A549 (cell line): ENCODE measurements at regions of chr1 and their contacts with region 1.

Region 1: DNA sequence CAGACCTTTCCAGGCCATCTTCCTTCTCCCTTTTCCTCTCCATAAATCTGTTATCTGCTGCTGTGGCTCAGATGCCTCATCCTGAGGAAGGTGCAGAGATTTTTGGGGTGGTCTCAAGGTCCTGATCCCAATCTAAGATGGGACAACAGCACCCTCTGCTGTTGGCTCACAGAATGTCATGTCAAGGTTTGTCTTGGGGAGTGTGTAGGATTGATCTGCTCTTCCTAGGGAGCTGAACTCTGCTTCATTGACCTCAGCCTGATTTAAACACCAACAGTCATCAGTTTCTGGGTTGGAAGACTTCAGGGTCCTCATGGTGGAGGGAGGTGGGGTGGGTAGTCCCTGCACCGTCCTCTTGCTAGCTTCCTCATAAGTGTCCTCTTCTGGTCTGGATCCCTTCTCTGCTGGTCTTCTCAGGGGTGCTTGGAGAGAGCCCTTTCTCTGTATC is 62.8 kb upstream of the LAX1 start:
- DNase-seq: peak; percentile 57 to 63
- ATAC-seq: peak; percentile 83 to 93
- H3K4me3 ChIP-seq: no peak overlapping the region
- H3K27ac ChIP-seq: no peak overlapping the region
- H3K4me1 ChIP-seq: no peaks in the 10 kb centered on the region
- CTCF ChIP-seq: peak; percentile 98
- EP300 ChIP-seq: no peak
- POLR2A ChIP-seq: no peak
- RAD21 ChIP-seq: peak; percentile 98 to 99

Region 2: GRCh38 chr1:203267347-203267846 is 434.8 kb before region 1 on chr1:
- CTCF ChIA-PET with region 1: interaction called, 40 read pairs
- POLR2A ChIA-PET with region 1: no interaction called
- DNase-seq: peak; percentile 85 to 89
- ATAC-seq: peak; percentile 76 to 83
- H3K4me3 ChIP-seq: peak overlapping the region; percentile 53
- H3K27ac ChIP-seq: peak overlapping the region; percentile 85 to 91
- H3K4me1 ChIP-seq: peaks cover 7% of the 10 kb centered on the region; the same call in 1 of the 3 replicates
- CTCF ChIP-seq: peak; percentile 95
- EP300 ChIP-seq: no peak
- POLR2A ChIP-seq: peak; percentile 61
- RAD21 ChIP-seq: peak; percentile 77 to 79

Region 3: GRCh38 chr1:203486618-203487370 is 215.4 kb before region 1 on chr1:
- CTCF ChIA-PET with region 1: interaction called, 44 read pairs
- POLR2A ChIA-PET with region 1: no interaction called
- DNase-seq: no peak
- ATAC-seq: no peak
- H3K4me3 ChIP-seq: no peak overlapping the region; the same call in 2 of the 3 replicates
- H3K27ac ChIP-seq: peak overlapping the region; percentile 76 to 88; a peak in 4 of 6 replicates
- H3K4me1 ChIP-seq: peaks cover 5% of the 10 kb centered on the region; the same call in 1 of the 3 replicates
- CTCF ChIP-seq: no peak
- EP300 ChIP-seq: no peak
- POLR2A ChIP-seq: no peak
- RAD21 ChIP-seq: no peak

Region 4: GRCh38 chr1:203504397-203505250 is 197.5 kb before region 1 on chr1:
- CTCF ChIA-PET with region 1: interaction called, 343 read pairs
- POLR2A ChIA-PET with region 1: no interaction called
- DNase-seq: peak; percentile 75 to 90
- ATAC-seq: peak; percentile 87 to 94
- H3K4me3 ChIP-seq: no peak overlapping the region
- H3K27ac ChIP-seq: peak overlapping the region in 1 of 2 experiments; percentile 24; a peak in 2 of 6 replicates
- H3K4me1 ChIP-seq: peaks cover 22% of the 10 kb centered on the region
- CTCF ChIP-seq: peak; percentile 89
- EP300 ChIP-seq: no peak
- POLR2A ChIP-seq: no peak
- RAD21 ChIP-seq: peak; percentile 87 to 98

Region 5: GRCh38 chr1:203572134-203572625 is 130.0 kb before region 1 on chr1:
- CTCF ChIA-PET with region 1: interaction called, 13 read pairs
- POLR2A ChIA-PET with region 1: no interaction called
- DNase-seq: no peak
- ATAC-seq: peak in 1 of 2 experiments; percentile 44; a peak in 2 of 6 replicates
- H3K4me3 ChIP-seq: no peak overlapping the region
- H3K27ac ChIP-seq: no peak overlapping the region
- H3K4me1 ChIP-seq: no peaks in the 10 kb centered on the region
- CTCF ChIP-seq: no peak
- EP300 ChIP-seq: no peak
- POLR2A ChIP-seq: no peak
- RAD21 ChIP-seq: no peak

Region 6: GRCh38 chr1:203603940-203604591 is 98.1 kb before region 1 on chr1:
- CTCF ChIA-PET with region 1: interaction called, 35 read pairs
- POLR2A ChIA-PET with region 1: no interaction called
- DNase-seq: no peak
- ATAC-seq: no peak
- H3K4me3 ChIP-seq: no peak overlapping the region
- H3K27ac ChIP-seq: no peak overlapping the region
- H3K4me1 ChIP-seq: peaks cover 22% of the 10 kb centered on the region
- CTCF ChIP-seq: no peak
- EP300 ChIP-seq: no peak
- POLR2A ChIP-seq: no peak
- RAD21 ChIP-seq: no peak

Region 7: GRCh38 chr1:203644661-203645495 is 57.3 kb before region 1 on chr1:
- CTCF ChIA-PET with region 1: interaction called, 11 read pairs
- POLR2A ChIA-PET with region 1: no interaction called
- DNase-seq: no peak
- ATAC-seq: peak; percentile 49 to 63; a peak in 4 of 6 replicates
- H3K4me3 ChIP-seq: no peak overlapping the region
- H3K27ac ChIP-seq: no peak overlapping the region
- H3K4me1 ChIP-seq: no peaks in the 10 kb centered on the region
- CTCF ChIP-seq: no peak
- EP300 ChIP-seq: no peak
- POLR2A ChIP-seq: no peak
- RAD21 ChIP-seq: no peak